Activated CD8-positive, alpha-beta T cell treated with anti-CD3 and anti-CD28 coated beads for 36 hours (primary cell): ENCODE measurements at regions of chr10 and their contacts with region 1.

Region 1: GRCh38 chr10:72273410-72274212 is at the start of gene DDIT4:
- DNase-seq: peak; percentile 100
- ATAC-seq: peak; percentile 86
- H3K4me3 Mint-ChIP-seq: peak within 1 kb of the TSS; percentile 100
- H3K27ac Mint-ChIP-seq: peak within 1 kb of the TSS; percentile 97
- H3K4me1 Mint-ChIP-seq: peaks cover 43% of the 10 kb centered on the region
- H3K27me3 Mint-ChIP-seq: no peaks in the 10 kb centered on the region
- CTCF ChIP-seq: no peak
- total RNA-seq, gene DDIT4: 1,071 to 1,096 TPM

Region 2: GRCh38 chr10:72248468-72249151 is 25.0 kb before region 1 on chr10:
- CTCF ChIA-PET with region 1: interaction called, 10 read pairs
- POLR2A ChIA-PET with region 1: interaction called, 45 read pairs
- intact Hi-C with region 1: loop called (anchors 1 kb)
- DNase-seq: peak; percentile 89
- ATAC-seq: peak; percentile 87
- H3K4me3 Mint-ChIP-seq: peak overlapping the region; percentile 77
- H3K27ac Mint-ChIP-seq: peak overlapping the region; percentile 93
- H3K4me1 Mint-ChIP-seq: peaks cover 72% of the 10 kb centered on the region
- H3K27me3 Mint-ChIP-seq: no peaks in the 10 kb centered on the region
- CTCF ChIP-seq: no peak

Region 3: GRCh38 chr10:72260588-72261322 is 12.9 kb before region 1 on chr10:
- CTCF ChIA-PET with region 1: interaction called, 35 read pairs
- POLR2A ChIA-PET with region 1: interaction called, 99 read pairs
- intact Hi-C with region 1: no loop called
- DNase-seq: peak; percentile 96
- ATAC-seq: peak; percentile 82
- H3K4me3 Mint-ChIP-seq: peak overlapping the region; percentile 79
- H3K27ac Mint-ChIP-seq: peak overlapping the region; percentile 96
- H3K4me1 Mint-ChIP-seq: peaks cover 52% of the 10 kb centered on the region
- H3K27me3 Mint-ChIP-seq: no peaks in the 10 kb centered on the region
- CTCF ChIP-seq: no peak

Region 4: DNA sequence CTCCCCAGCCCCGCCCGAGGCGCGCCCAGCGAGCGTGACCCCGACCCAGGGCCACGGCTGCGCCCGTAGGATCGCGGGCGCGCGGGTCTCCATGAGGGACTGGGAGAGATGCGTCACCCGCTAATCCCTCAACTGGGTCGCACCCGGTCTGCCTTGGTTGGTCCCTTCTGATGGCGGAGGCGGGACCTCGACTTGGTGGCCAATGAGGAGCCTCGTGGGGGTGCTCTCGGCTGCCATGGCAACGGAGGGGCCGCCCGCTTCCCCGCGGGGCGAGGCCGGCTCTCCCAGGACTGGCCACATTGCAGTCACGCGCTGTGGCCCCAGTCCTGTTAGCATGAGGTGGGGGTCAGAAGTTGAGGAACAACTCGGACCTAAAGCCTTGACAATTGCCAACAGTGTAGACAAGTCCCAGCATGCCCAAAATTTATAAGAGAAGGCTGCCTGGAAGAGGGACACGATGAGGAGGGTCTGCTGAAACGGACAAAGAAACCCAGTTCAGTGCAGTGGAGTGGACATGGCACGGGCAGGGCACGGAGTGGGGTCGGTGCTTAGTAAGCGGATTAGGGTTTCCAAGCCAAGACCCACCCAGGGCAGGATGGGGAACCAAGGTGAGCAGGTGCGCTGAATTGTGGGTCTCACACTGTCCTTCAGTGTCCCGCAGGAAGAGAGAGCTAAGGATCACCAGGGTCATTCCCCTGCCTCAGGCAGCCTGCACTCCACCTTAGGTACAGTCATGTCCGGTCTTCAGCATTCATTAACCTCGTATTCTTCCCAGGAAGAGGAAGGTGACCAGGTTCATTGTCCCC is 24.6 kb after region 1 on chr10:
- CTCF ChIA-PET with region 1: interaction called, 36 read pairs
- POLR2A ChIA-PET with region 1: interaction called, 269 read pairs
- intact Hi-C with region 1: no loop called
- DNase-seq: peak; percentile 98
- ATAC-seq: peak; percentile 76
- H3K4me3 Mint-ChIP-seq: peak overlapping the region; percentile 80
- H3K27ac Mint-ChIP-seq: peak overlapping the region; percentile 99
- H3K4me1 Mint-ChIP-seq: peaks cover 54% of the 10 kb centered on the region
- H3K27me3 Mint-ChIP-seq: no peaks in the 10 kb centered on the region
- CTCF ChIP-seq: no peak

Region 5: DNA sequence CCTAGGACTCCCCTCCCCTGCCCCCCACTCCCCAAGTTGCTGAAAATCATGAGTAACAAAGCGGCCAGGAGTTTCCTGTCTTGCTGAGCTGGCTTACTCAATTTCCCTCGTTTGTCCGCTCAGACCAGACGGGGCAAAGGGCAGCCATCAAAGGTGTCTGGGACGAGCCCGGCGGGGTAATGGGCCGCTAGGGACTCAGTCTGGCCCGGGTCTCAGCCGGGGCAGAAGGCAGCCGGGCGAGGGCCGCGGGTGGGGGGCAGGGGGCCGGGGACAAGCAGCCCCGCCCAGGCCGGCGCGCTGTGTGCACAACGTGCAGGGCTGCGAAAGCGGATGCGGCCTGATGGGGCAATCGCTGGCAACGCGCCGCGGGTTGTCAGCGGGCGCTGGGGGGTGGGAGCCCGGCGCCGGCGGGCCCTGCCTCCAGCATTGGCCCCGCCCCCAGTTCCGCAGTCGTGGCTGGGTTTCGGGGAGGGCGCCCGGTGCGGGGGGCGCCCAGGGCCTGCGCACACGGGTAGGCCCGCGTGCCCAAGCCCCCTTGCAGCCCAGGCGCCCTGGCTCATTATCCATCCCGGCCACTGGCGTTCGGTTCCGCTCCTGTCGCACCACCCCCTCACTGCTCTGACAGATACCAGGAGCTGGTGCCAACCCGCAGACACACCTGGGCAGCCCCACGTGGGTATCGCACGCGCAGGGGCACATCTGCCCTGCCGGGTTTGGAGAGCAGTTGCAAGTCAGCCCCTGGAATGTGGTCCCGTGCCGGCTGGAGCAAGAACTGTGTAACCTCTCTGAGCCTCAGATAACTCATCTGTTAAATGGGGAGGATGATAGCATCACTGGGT is 46.0 kb after region 1 on chr10:
- CTCF ChIA-PET with region 1: interaction called, 41 read pairs
- POLR2A ChIA-PET with region 1: interaction called, 290 read pairs
- intact Hi-C with region 1: no loop called
- DNase-seq: peak; percentile 93
- ATAC-seq: peak; percentile 52
- H3K4me3 Mint-ChIP-seq: peak overlapping the region; percentile 86
- H3K27ac Mint-ChIP-seq: peak overlapping the region; percentile 99
- H3K4me1 Mint-ChIP-seq: peaks cover 78% of the 10 kb centered on the region
- H3K27me3 Mint-ChIP-seq: no peaks in the 10 kb centered on the region
- CTCF ChIP-seq: no peak